ENCODE measurements at regions of chr7 and their contacts with region 1.

Region 1: GRCh38 chr7:111741811-111742240 is 179.5 kb upstream of the IMMP2L start:
- DNase-seq: no peak
- ATAC-seq: peak; percentile 60 to 66
- H3K4me3 ChIP-seq: no peak overlapping the region
- H3K27ac ChIP-seq: no peak overlapping the region
- H3K4me1 ChIP-seq: no peaks in the 10 kb centered on the region
- H3K27me3 ChIP-seq: no peaks in the 10 kb centered on the region
- CTCF ChIP-seq: peak in 4 of 5 experiments; percentile 37 to 56 (median 52)
- POLR2A ChIP-seq: no peak

Region 2: DNA sequence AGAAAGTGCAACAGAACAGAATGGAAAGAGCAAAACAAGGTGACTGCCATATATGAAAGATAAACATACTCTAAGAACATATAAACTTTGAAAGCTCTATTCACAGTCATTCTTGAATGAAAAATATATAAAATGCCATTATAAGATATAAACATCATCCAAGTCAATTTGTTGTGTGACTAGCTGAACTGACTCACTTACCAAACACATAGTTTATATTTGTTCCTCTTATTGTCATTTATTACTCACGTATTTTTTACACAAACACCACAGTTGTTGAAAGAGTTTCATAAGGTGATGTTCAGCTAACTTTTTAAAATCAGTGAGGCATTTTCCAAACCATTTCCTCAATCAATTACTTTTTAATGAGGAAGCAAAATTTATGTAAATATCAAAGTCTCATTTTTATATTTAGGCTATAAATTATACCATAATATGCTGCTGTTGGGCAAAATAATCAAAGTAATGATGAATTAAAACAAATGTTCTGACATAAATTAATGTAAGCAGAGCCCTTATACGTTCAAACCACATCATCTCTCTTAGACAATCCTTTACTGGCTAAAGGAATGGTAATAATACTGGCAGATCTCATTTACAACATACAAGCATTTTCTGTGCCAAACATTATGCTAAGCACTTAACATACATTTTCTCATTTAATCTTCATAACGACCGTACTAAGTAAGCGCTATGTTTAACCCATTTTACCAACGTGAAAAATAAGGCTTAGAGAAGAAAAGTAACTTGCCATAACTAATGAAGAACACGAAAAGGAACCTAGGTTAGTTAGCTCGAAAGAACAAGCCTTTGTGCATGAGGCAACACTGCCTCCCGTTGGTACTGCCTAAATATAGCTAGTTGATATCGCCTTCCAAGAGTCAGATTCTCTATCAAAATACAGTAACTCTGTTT is 643.6 kb before region 1 on chr7:
- in situ Hi-C with region 1: loop called in 1 of 4 experiments (anchors 25 kb)
- intact Hi-C with region 1: no loop called
- DNase-seq: no peak
- ATAC-seq: peak in 1 of 2 donors; percentile 89
- H3K4me3 ChIP-seq: no peak overlapping the region
- H3K27ac ChIP-seq: no peak overlapping the region
- H3K4me1 ChIP-seq: peaks cover 10 to 14% of the 10 kb centered on the region in 2 donors
- H3K27me3 ChIP-seq: no peaks in the 10 kb centered on the region
- CTCF ChIP-seq: peak in 3 of 5 experiments; percentile 16 to 51 (median 30)
- POLR2A ChIP-seq: no peak

Region 3: DNA sequence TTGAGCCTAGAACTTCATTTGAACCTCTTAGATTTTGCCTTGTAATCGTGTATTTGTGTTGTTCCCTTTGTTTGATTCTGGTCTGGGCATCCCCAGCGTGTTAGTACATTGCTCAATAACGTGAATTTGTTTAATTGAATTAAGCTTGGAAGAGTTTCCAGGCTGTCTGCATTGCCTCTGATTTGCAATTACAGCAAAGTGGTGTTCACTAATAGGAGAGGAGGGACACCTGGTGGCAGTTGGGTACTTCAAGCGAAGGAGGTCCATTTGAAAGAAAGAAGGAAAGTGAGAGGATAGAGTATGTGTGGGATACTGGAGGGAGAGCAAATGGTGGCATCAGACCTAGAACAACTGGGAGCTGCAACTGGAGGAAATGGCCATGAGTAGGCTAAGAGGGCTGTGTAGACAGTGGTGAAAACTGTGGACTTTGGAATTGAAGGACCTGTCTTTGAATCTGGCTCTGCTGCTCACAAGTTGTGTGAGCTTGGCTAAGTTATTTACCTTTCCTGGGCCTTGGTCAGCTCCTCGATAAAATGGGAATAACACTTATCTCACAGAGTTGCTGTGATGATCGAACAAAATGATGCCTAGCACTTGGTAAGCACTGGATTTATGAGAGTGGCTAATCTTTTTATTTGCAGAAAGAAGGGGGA is 754.1 kb after region 1 on chr7:
- in situ Hi-C with region 1: loop called in 1 of 4 experiments (anchors 10 kb)
- intact Hi-C with region 1: loop called (anchors 5 kb)
- DNase-seq: peak; percentile 24 to 60
- ATAC-seq: peak; percentile 86 to 94
- H3K4me3 ChIP-seq: no peak overlapping the region
- H3K27ac ChIP-seq: no peak overlapping the region
- H3K4me1 ChIP-seq: peaks cover 0 to 4% of the 10 kb centered on the region in 2 donors
- H3K27me3 ChIP-seq: no peaks in the 10 kb centered on the region
- CTCF ChIP-seq: peak; percentile 60 to 79 (median 66)
- POLR2A ChIP-seq: no peak